Gastrocnemius medialis (tissue), 4 donors: ENCODE measurements at regions of chr11 and their contacts with region 1.

Region 1: GRCh38 chr11:123461164-123461563 is 31.1 kb downstream of the GRAMD1B start:
- DNase-seq: peak; percentile 89 to 93
- ATAC-seq: peak; percentile 97
- H3K4me3 ChIP-seq: no peak overlapping the region
- H3K27ac ChIP-seq: peak overlapping the region; percentile 38 to 76 (median 72)
- H3K4me1 ChIP-seq: peaks cover 7% of the 10 kb centered on the region in 2 donors
- H3K27me3 ChIP-seq: no peaks in the 10 kb centered on the region
- CTCF ChIP-seq: peak in 3 of 5 experiments; percentile 33 to 41 (median 39)
- POLR2A ChIP-seq: no peak

Region 2: DNA sequence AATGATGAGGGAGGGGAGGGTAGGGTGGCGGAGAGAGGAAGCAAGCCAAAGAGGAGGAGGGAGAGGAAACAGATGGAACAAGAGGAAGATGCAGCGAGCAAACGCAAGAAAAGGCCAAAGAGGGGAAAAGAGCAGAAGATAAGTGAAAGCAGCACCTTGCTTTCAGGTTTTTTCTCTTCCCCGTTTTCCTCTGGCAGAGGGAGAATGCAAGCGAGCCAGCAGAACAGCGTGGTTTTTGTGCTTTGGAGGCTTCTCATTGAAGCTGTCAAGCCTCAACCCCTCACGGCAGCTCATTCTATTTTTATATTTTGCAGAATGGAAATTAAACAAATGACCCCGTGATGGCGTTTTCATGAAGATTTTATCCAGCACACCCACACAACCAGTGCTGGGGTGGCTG is 98.2 kb before region 1 on chr11:
- in situ Hi-C with region 1: no loop called
- intact Hi-C with region 1: no loop called
- DNase-seq: no peak
- ATAC-seq: no peak
- H3K4me3 ChIP-seq: no peak overlapping the region
- H3K27ac ChIP-seq: no peak overlapping the region
- H3K4me1 ChIP-seq: peaks cover 0 to 10% of the 10 kb centered on the region in 2 donors
- H3K27me3 ChIP-seq: peaks cover 0 to 8% (median 4%) of the 10 kb centered on the region in 3 donors
- CTCF ChIP-seq: no peak
- POLR2A ChIP-seq: no peak

Region 3: DNA sequence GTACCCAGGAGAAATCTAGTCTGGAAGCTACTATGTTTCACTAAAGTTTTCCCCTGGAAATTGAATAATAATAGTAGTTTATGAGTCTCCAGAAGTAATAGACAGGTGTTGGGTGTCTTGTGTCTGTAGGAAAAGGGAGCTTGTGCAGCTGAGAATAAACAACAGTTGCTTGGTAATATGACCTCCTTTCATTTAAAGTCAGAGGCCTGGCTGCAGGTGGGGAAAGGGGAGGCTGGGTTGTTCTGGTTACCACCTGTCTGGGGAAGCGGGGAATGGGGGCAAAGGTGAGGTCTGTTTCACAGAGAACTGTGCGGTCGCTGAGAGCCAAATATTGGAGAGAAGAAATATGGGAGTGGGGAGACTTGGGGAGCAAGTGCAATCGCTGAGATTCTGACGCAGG is 34.4 kb before region 1 on chr11:
- in situ Hi-C with region 1: no loop called
- intact Hi-C with region 1: loop called (anchors 2 kb)
- DNase-seq: peak; percentile 39 to 43
- ATAC-seq: peak; percentile 81 to 83
- H3K4me3 ChIP-seq: no peak overlapping the region
- H3K27ac ChIP-seq: peak overlapping the region; percentile 52 to 83 (median 68)
- H3K4me1 ChIP-seq: peaks cover 34 to 39% of the 10 kb centered on the region in 2 donors
- H3K27me3 ChIP-seq: no peaks in the 10 kb centered on the region
- CTCF ChIP-seq: no peak
- POLR2A ChIP-seq: no peak